Activated CD4-positive, alpha-beta T cell treated with anti-CD3 and anti-CD28 coated beads for 36 hours (primary cell): ENCODE measurements at regions of chr1 and their contacts with region 1.

Region 1: DNA sequence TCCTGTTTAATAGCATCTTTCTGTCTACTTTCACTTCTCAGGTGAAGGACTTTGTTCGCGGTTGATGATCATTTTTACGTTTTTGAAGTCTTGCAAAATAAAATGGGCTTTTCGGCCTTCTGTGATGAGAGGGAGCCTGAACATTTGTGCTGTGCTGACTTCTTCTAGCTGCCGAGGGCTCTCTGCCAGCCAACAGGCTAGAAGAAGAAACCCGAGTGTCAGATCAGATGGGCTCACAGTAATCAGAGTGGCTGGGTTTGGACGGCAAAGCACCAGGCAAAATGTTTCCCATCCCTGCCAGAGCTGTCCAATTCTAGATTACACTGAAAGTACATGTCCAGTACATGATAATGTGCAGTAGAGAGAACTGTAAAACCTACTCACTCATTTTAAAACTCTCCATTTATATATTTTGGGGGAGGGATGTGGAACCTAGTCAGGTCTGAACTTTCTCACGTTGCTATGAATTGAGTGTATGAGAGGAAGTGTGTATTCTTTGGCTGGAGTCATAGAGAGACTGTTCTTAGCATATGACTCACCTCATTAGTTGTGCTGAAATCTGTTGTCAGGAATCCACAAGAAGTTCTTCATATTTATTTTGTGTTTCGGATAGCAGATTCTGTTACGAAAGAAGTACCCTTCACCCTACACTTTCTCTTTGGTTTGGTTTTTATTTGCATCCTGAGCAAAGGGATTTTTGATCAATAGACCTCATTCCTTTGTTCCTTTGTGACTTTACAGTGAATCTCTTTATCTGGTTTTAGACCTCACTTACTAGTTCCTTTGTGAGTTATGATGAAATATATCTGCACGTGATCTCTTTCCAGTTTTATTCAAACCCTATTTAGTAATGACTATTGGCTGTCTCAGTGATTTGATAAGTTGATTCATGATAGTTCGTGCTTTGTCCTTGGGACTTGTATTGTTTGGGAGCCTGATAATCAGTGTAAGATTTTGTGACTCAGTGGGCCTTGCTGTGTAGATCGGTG is 4.8 kb downstream of the ATP1A1 start:
- DNase-seq: peak; percentile 58
- ATAC-seq: peak; percentile 74
- H3K4me3 Mint-ChIP-seq: peak overlapping the region; percentile 93
- H3K27ac Mint-ChIP-seq: peak overlapping the region; percentile 92
- H3K4me1 Mint-ChIP-seq: peaks cover 73% of the 10 kb centered on the region
- H3K27me3 Mint-ChIP-seq: no peaks in the 10 kb centered on the region

Region 2: GRCh38 chr1:116151739-116152576 is 225.9 kb before region 1 on chr1:
- CTCF ChIA-PET with region 1: interaction called, 4 read pairs
- POLR2A ChIA-PET with region 1: no interaction called
- intact Hi-C with region 1: loop called (anchors 1 to 2 kb)
- DNase-seq: peak; percentile 87
- ATAC-seq: peak; percentile 98
- H3K4me3 Mint-ChIP-seq: peak overlapping the region; percentile 49
- H3K27ac Mint-ChIP-seq: peak overlapping the region; percentile 70
- H3K4me1 Mint-ChIP-seq: peaks cover 18% of the 10 kb centered on the region
- H3K27me3 Mint-ChIP-seq: peaks cover 4% of the 10 kb centered on the region

Region 3: DNA sequence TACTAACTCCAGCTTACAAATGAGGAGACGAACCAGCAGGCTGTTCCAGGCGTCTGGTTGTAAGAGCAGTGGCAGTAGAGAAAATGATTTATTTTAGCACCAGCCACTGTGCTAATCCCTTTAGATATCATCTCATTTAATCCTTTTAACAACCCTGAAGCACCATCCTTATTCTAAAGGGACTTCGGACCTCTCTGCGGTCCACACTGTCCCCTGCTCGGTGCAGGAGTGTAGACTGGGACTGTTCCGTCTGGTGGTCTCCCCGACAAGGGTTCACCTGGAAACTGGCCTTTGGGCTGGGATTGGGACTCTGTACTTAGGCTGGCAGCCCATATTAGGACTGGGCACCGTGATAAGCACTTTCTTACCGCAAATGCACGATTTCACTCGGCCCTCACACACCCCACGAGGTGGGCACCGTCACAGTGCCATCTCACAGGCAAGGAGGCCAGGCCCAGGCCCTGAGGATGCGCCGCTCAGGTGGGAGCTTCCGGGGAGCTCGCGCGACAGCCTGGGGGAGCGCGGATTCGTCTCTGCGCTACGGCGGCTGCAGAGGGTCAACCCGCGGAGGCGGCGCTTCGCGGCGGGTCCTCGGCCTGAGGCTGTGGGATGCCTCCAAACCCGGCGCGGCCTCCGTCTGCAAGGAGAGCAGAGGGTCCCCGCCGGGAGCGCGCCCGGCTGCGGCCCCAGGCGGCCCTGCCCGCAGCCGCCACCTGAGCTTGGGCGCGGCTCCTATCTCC is 40.4 kb after region 1 on chr1:
- CTCF ChIA-PET with region 1: interaction called, 12 read pairs
- POLR2A ChIA-PET with region 1: interaction called, 3 read pairs
- intact Hi-C with region 1: loop called (anchors 1 kb)
- DNase-seq: peak; percentile 92
- ATAC-seq: peak; percentile 88
- H3K4me3 Mint-ChIP-seq: peak overlapping the region; percentile 92
- H3K27ac Mint-ChIP-seq: peak overlapping the region; percentile 88
- H3K4me1 Mint-ChIP-seq: peaks cover 32% of the 10 kb centered on the region
- H3K27me3 Mint-ChIP-seq: no peaks in the 10 kb centered on the region

Region 4: GRCh38 chr1:116514708-116515525 is 137.1 kb after region 1 on chr1:
- CTCF ChIA-PET with region 1: no interaction called
- POLR2A ChIA-PET with region 1: interaction called, 6 read pairs
- intact Hi-C with region 1: loop called in 1 of 2 experiments (anchors 1 kb)
- DNase-seq: peak; percentile 78
- ATAC-seq: peak; percentile 94
- H3K4me3 Mint-ChIP-seq: peak overlapping the region; percentile 39
- H3K27ac Mint-ChIP-seq: peak overlapping the region; percentile 85
- H3K4me1 Mint-ChIP-seq: peaks cover 56% of the 10 kb centered on the region
- H3K27me3 Mint-ChIP-seq: no peaks in the 10 kb centered on the region

Region 5: DNA sequence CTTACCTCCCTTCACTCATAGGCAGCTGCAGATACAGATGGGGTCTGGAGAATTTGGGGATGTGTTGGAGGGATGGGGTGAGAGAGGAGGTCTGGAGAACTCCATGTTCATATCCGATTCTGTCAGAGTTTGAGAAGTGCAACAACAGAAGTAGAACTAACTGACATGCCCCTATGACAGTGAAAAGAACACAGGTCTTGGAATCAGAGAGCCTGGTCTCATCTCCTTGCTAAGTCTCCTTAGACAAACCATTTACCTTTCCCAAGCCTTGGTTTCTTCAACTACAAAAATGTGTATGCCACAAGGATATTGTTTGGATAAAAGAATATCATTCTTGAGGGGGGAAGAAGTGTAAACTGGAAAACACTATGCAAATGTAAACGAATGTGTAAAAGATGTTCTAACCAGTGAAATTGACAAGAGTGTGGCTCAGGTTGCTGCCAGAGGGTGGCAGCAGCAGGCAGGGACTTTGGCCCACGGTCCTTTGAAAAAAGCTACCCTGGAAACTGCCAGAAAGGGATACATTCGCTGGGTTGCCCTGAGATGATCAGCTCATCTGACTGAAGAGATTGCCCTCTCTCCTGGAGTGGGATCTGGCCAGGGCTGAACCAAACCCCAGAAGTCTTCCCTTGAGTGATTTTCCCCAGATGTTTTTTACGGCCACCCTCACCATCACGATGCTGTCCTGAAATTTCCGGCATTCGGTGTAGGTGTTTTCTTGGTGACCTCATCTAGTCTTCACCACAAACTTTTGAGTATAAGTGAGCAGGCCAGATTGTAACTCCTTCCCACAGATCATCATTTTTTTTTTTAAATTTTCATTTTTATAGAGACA is 359.4 kb after region 1 on chr1:
- CTCF ChIA-PET with region 1: no interaction called
- POLR2A ChIA-PET with region 1: interaction called, 3 read pairs
- intact Hi-C with region 1: loop called in 1 of 2 experiments (anchors 5 kb)
- DNase-seq: peak; percentile 86
- ATAC-seq: peak; percentile 56
- H3K4me3 Mint-ChIP-seq: peak overlapping the region; percentile 71
- H3K27ac Mint-ChIP-seq: peak overlapping the region; percentile 98
- H3K4me1 Mint-ChIP-seq: peaks cover 57% of the 10 kb centered on the region
- H3K27me3 Mint-ChIP-seq: no peaks in the 10 kb centered on the region

Region 6: GRCh38 chr1:117001254-117001927 is 623.6 kb after region 1 on chr1 and contains the start of gene CD101:
- CTCF ChIA-PET with region 1: no interaction called
- POLR2A ChIA-PET with region 1: no interaction called
- intact Hi-C with region 1: loop called (anchors 1 to 5 kb)
- DNase-seq: peak; percentile 70
- ATAC-seq: peak; percentile 95
- H3K4me3 Mint-ChIP-seq: peak within 1 kb of the TSS; percentile 3
- H3K27ac Mint-ChIP-seq: peak within 1 kb of the TSS; percentile 66
- H3K4me1 Mint-ChIP-seq: peaks cover 53% of the 10 kb centered on the region
- H3K27me3 Mint-ChIP-seq: peaks cover 3% of the 10 kb centered on the region
- total RNA-seq, gene CD101: 0.30 to 0.60 TPM

Region 7: DNA sequence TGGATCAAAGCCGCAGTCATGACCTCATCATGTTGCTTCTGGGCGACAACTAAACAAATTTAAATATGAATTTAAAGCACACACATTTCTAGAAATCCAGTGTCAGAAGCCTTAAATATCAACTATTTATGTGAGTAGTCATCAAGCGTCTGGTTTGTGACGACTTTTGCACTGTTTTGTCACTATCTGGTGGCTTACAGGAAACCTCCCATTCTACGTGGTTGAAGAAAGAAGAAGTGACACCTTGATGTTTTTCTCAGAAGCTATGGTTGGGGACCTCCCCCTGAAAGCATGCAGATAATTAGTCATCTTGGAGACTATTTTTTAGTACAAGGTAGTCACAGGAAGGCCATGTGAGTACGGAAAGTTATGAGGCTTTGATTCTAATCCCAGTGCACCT is 1286.5 kb after region 1 on chr1:
- CTCF ChIA-PET with region 1: no interaction called
- POLR2A ChIA-PET with region 1: no interaction called
- intact Hi-C with region 1: loop called in 1 of 2 experiments (anchors 2 kb)
- DNase-seq: peak; percentile 76
- ATAC-seq: peak; percentile 85
- H3K4me3 Mint-ChIP-seq: no peak overlapping the region
- H3K27ac Mint-ChIP-seq: peak overlapping the region; percentile 84
- H3K4me1 Mint-ChIP-seq: peaks cover 66% of the 10 kb centered on the region
- H3K27me3 Mint-ChIP-seq: peaks cover 5% of the 10 kb centered on the region